ENCODE measurements at regions of chr7 and their contacts with region 1.

Region 1: GRCh38 chr7:55365675-55366460 is 731 bp downstream of the LANCL2 start:
- DNase-seq: peak; percentile 95
- H3K4me3 Mint-ChIP-seq: peak overlapping the region; percentile 80
- H3K27ac Mint-ChIP-seq: peak overlapping the region; percentile 98
- H3K4me1 Mint-ChIP-seq: peaks cover 26% of the 10 kb centered on the region
- H3K27me3 Mint-ChIP-seq: no peaks in the 10 kb centered on the region

Region 2: GRCh38 chr7:54995631-54996340 is 370.1 kb before region 1 on chr7:
- CTCF ChIA-PET with region 1: no interaction called
- POLR2A ChIA-PET with region 1: no interaction called
- intact Hi-C with region 1: loop called (anchors 5 kb)
- DNase-seq: peak; percentile 50
- H3K4me3 Mint-ChIP-seq: no peak overlapping the region
- H3K27ac Mint-ChIP-seq: peak overlapping the region; percentile 65
- H3K4me1 Mint-ChIP-seq: peaks cover 29% of the 10 kb centered on the region
- H3K27me3 Mint-ChIP-seq: peaks cover 7% of the 10 kb centered on the region

Region 3: GRCh38 chr7:55206235-55207029 is 159.4 kb before region 1 on chr7:
- CTCF ChIA-PET with region 1: no interaction called
- POLR2A ChIA-PET with region 1: no interaction called
- intact Hi-C with region 1: no loop called
- DNase-seq: peak; percentile 18
- H3K4me3 Mint-ChIP-seq: no peak overlapping the region
- H3K27ac Mint-ChIP-seq: no peak overlapping the region
- H3K4me1 Mint-ChIP-seq: no peaks in the 10 kb centered on the region
- H3K27me3 Mint-ChIP-seq: no peaks in the 10 kb centered on the region

Region 4: GRCh38 chr7:55309040-55309991 is 56.6 kb before region 1 on chr7:
- CTCF ChIA-PET with region 1: interaction called, 14 read pairs
- POLR2A ChIA-PET with region 1: interaction called, 32 read pairs
- intact Hi-C with region 1: loop called (anchors 1 kb)
- DNase-seq: peak; percentile 95
- H3K4me3 Mint-ChIP-seq: peak overlapping the region; percentile 16
- H3K27ac Mint-ChIP-seq: peak overlapping the region; percentile 90
- H3K4me1 Mint-ChIP-seq: peaks cover 43% of the 10 kb centered on the region
- H3K27me3 Mint-ChIP-seq: peaks cover 25% of the 10 kb centered on the region

Region 5: GRCh38 chr7:55515569-55516279 is 149.9 kb after region 1 on chr7:
- CTCF ChIA-PET with region 1: no interaction called
- POLR2A ChIA-PET with region 1: interaction called, 3 read pairs
- intact Hi-C with region 1: loop called (anchors 5 kb)
- DNase-seq: peak; percentile 53
- H3K4me3 Mint-ChIP-seq: peak overlapping the region; percentile 18
- H3K27ac Mint-ChIP-seq: peak overlapping the region; percentile 74
- H3K4me1 Mint-ChIP-seq: peaks cover 82% of the 10 kb centered on the region
- H3K27me3 Mint-ChIP-seq: no peaks in the 10 kb centered on the region

Region 6: GRCh38 chr7:55887821-55888247 is 522.0 kb after region 1 on chr7:
- CTCF ChIA-PET with region 1: no interaction called
- POLR2A ChIA-PET with region 1: no interaction called
- intact Hi-C with region 1: loop called (anchors 1 kb)
- DNase-seq: no peak
- H3K4me3 Mint-ChIP-seq: peak overlapping the region; percentile 76
- H3K27ac Mint-ChIP-seq: peak overlapping the region; percentile 74
- H3K4me1 Mint-ChIP-seq: peaks cover 4% of the 10 kb centered on the region
- H3K27me3 Mint-ChIP-seq: no peaks in the 10 kb centered on the region

Measured in activated CD4-positive, alpha-beta memory T cell treated with anti-CD3 and anti-CD28 coated beads for 36 hours (primary cell).